Gastrocnemius medialis (tissue), 4 donors: ENCODE measurements at regions of chr16 and their contacts with region 1.

Region 1: GRCh38 chr16:87380859-87381258 is 2.7 kb downstream of the FBXO31 start:
- DNase-seq: no peak
- ATAC-seq: no peak
- H3K4me3 ChIP-seq: peak overlapping the region; percentile 53 to 83 (median 80)
- H3K27ac ChIP-seq: peak overlapping the region; percentile 83 to 97 (median 94)
- H3K4me1 ChIP-seq: peaks cover 53 to 63% of the 10 kb centered on the region in 2 donors
- H3K27me3 ChIP-seq: no peaks in the 10 kb centered on the region
- CTCF ChIP-seq: peak in 1 of 5 experiments; percentile 31
- POLR2A ChIP-seq: no peak

Region 2: GRCh38 chr16:87358696-87359095 is 22.2 kb before region 1 on chr16:
- in situ Hi-C with region 1: no loop called
- intact Hi-C with region 1: loop called (anchors 2 kb)
- DNase-seq: peak; percentile 74 to 81
- ATAC-seq: peak; percentile 53 to 60
- H3K4me3 ChIP-seq: no peak overlapping the region
- H3K27ac ChIP-seq: peak overlapping the region; percentile 92 to 97 (median 93)
- H3K4me1 ChIP-seq: peaks cover 60 to 72% of the 10 kb centered on the region in 2 donors
- H3K27me3 ChIP-seq: no peaks in the 10 kb centered on the region
- CTCF ChIP-seq: no peak
- POLR2A ChIP-seq: no peak

Region 3: GRCh38 chr16:87499189-87499486 is 118.3 kb after region 1 on chr16:
- in situ Hi-C with region 1: no loop called
- intact Hi-C with region 1: no loop called
- DNase-seq: no peak
- ATAC-seq: no peak
- H3K4me3 ChIP-seq: no peak overlapping the region
- H3K27ac ChIP-seq: no peak overlapping the region
- H3K4me1 ChIP-seq: no peaks in the 10 kb centered on the region
- H3K27me3 ChIP-seq: no peaks in the 10 kb centered on the region
- CTCF ChIP-seq: no peak
- POLR2A ChIP-seq: no peak